ENCODE measurements at regions of chr3 and their contacts with region 1.

Region 1: GRCh38 chr3:142595951-142596725 is at the start of gene PLS1:
- DNase-seq: peak; percentile 82
- H3K4me3 ChIP-seq: peak within 1 kb of the TSS; percentile 61 to 67
- H3K27ac ChIP-seq: no peak within 1 kb of the TSS
- H3K4me1 ChIP-seq: peaks cover 3% of the 10 kb centered on the region
- H3K27me3 ChIP-seq: no peaks in the 10 kb centered on the region
- CTCF ChIP-seq: no peak
- POLR2A ChIP-seq: no peak
- total RNA-seq, gene PLS1: 5.1 to 10.6 TPM

Region 2: DNA sequence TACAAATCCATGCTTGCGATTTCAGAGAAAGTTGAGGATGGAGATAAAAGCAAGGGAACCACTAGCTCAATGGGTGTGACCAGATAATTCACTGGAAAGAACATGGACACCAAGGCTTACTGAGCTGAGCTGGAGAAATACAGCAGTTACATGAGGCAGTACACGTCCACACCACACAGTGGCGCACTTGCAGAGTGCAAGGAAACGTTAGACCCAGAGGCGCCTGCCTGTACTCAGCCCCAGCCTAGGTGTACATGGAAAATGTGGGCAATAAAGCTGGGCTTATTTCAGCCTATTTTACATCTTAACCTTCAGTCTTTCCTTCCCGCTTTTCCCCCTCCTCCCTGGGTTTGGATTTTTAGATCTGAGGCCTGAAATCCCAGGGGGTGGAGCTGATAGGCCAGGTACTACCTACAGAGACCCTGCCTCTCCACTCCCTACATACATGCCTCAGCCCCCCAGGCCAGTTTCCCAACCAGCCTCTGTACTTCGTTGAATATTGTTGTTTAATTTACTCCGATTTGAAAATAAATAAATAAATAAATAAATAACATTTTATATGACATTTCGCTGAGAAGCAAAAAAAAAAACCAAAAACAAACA is 232.7 kb after region 1 on chr3:
- intact Hi-C with region 1: no loop called
- DNase-seq: peak; percentile 92
- H3K4me3 ChIP-seq: no peak overlapping the region
- H3K27ac ChIP-seq: no peak overlapping the region
- H3K4me1 ChIP-seq: no peaks in the 10 kb centered on the region
- H3K27me3 ChIP-seq: no peaks in the 10 kb centered on the region
- CTCF ChIP-seq: peak; percentile 53 to 76 (median 73)
- POLR2A ChIP-seq: no peak

Region 3: GRCh38 chr3:142993958-142994442 is 397.9 kb after region 1 on chr3:
- intact Hi-C with region 1: loop called (anchors 10 kb)
- DNase-seq: peak; percentile 80
- H3K4me3 ChIP-seq: no peak overlapping the region
- H3K27ac ChIP-seq: no peak overlapping the region
- H3K4me1 ChIP-seq: no peaks in the 10 kb centered on the region
- H3K27me3 ChIP-seq: no peaks in the 10 kb centered on the region
- CTCF ChIP-seq: peak; percentile 16 to 70 (median 68)
- POLR2A ChIP-seq: no peak

Measured in testis (tissue), 5 donors.